ENCODE measurements at regions of chr20 and their contacts with region 1.

Region 1: DNA sequence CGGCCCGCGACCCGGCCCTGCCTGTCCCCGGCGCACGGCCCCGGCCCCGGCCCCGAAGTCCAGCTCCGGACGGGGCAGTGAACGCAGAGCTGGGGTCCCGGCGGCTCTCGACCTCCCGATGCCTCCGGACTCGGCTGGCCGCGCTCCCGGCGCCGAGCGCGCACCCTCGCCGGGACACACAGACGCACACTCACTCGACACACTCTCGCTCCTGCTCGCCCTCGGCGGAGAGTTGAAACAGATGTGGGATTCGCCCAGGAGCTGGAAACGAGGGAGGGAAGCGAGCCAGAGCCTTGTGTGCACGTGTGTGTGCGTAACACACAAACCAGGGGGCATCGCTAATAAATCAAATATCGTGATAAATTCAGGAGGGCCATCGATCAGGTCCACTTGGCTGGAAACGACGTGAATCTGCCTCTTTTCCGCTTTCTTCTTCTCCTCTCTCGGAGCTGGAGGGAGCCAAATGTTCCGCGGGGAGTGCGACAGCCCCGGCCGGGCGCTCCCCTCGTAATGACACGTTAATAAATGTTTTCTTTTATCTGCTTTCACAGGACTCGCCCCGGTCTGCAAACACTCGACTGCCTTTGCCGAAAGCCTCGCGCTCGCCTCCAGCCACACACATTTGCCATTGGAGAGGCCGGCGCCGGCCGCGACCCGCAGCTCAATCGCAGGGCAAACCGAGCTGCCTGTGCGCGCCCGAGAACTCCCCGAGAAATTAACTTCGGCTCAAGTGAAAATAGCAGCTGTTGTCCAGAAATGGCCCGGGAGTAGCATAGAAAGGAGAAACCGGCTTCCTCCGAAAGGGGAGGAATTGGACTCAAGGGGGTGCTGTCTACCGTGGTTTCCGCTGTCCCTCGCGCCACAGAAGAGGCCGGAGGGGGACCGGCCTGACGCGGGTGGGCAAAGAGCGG is 828 bp upstream of the SULF2 start:
- DNase-seq: peak; percentile 89 to 91
- H3K4me3 ChIP-seq: peak overlapping the region; percentile 55
- H3K4me3 Mint-ChIP-seq: peak overlapping the region; percentile 96
- H3K27ac Mint-ChIP-seq: peak overlapping the region; percentile 85
- H3K4me1 ChIP-seq: peaks cover 19% of the 10 kb centered on the region
- H3K4me1 Mint-ChIP-seq: peaks cover 35% of the 10 kb centered on the region
- H3K27me3 ChIP-seq: no peaks in the 10 kb centered on the region
- H3K27me3 Mint-ChIP-seq: peaks cover 2% of the 10 kb centered on the region
- CTCF ChIP-seq: peak; percentile 93

Region 2: GRCh38 chr20:47663333-47664067 is 122.6 kb before region 1 on chr20:
- CTCF ChIA-PET with region 1: interaction called, 5 read pairs
- POLR2A ChIA-PET with region 1: no interaction called
- intact Hi-C with region 1: loop called (anchors 5 kb)
- DNase-seq: peak; percentile 92 to 97
- H3K4me3 ChIP-seq: no peak overlapping the region
- H3K4me3 Mint-ChIP-seq: no peak overlapping the region
- H3K27ac Mint-ChIP-seq: peak overlapping the region; percentile 56
- H3K4me1 ChIP-seq: peaks cover 16% of the 10 kb centered on the region
- H3K4me1 Mint-ChIP-seq: peaks cover 18% of the 10 kb centered on the region
- H3K27me3 ChIP-seq: no peaks in the 10 kb centered on the region
- H3K27me3 Mint-ChIP-seq: no peaks in the 10 kb centered on the region
- CTCF ChIP-seq: peak; percentile 99 to 100

Region 3: DNA sequence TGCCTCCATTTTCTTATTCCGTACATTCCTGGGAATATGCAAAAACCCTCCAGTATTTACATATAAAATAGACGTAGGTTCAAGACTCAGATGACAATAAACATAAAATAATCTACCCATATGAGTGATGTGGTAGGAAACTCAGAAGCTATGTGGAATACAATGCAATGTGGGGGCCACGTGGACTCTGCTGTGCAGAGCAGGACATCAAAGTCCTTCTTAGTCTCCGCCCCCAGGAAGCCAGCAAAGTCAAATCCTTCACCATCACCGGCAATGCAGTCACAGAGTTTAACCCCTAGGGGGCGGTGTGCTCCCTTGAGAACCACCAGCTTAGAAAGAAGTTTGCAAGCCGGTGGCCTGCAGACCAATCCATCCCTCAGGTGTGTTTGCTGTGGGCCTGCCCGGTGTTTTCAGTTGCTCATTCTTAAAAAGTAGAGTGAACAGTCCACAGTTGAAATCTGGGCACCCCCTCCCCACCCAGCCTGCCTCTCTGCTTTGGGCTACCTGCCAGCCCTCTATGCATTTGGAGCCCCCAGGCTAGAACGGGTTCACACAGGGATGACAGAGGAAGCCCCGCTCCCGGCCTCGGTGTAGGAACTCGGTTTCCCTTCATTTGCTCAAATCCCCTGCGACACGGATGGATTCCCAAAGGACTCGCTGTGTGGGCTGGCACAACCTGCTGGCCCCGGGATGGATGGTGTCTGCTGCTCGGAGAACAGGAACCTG is 60.7 kb before region 1 on chr20:
- CTCF ChIA-PET with region 1: interaction called, 19 read pairs
- POLR2A ChIA-PET with region 1: no interaction called
- intact Hi-C with region 1: loop called (anchors 1 kb)
- DNase-seq: peak; percentile 94 to 95
- H3K4me3 ChIP-seq: no peak overlapping the region
- H3K4me3 Mint-ChIP-seq: no peak overlapping the region
- H3K27ac Mint-ChIP-seq: no peak overlapping the region
- H3K4me1 ChIP-seq: peaks cover 12% of the 10 kb centered on the region
- H3K4me1 Mint-ChIP-seq: peaks cover 9% of the 10 kb centered on the region
- H3K27me3 ChIP-seq: no peaks in the 10 kb centered on the region
- H3K27me3 Mint-ChIP-seq: no peaks in the 10 kb centered on the region
- CTCF ChIP-seq: peak; percentile 99 to 100

Region 4: GRCh38 chr20:47950073-47950913 is 164.2 kb after region 1 on chr20:
- CTCF ChIA-PET with region 1: no interaction called
- POLR2A ChIA-PET with region 1: no interaction called
- intact Hi-C with region 1: loop called (anchors 10 kb)
- DNase-seq: no peak
- H3K4me3 ChIP-seq: no peak overlapping the region
- H3K4me3 Mint-ChIP-seq: no peak overlapping the region
- H3K27ac Mint-ChIP-seq: no peak overlapping the region
- H3K4me1 ChIP-seq: no peaks in the 10 kb centered on the region
- H3K4me1 Mint-ChIP-seq: no peaks in the 10 kb centered on the region
- H3K27me3 ChIP-seq: no peaks in the 10 kb centered on the region
- H3K27me3 Mint-ChIP-seq: no peaks in the 10 kb centered on the region
- CTCF ChIP-seq: no peak

Region 5: GRCh38 chr20:48188657-48189551 is 402.8 kb after region 1 on chr20:
- CTCF ChIA-PET with region 1: interaction called, 6 read pairs
- POLR2A ChIA-PET with region 1: no interaction called
- intact Hi-C with region 1: loop called (anchors 1 kb)
- DNase-seq: peak; percentile 67
- H3K4me3 ChIP-seq: no peak overlapping the region
- H3K4me3 Mint-ChIP-seq: no peak overlapping the region
- H3K27ac Mint-ChIP-seq: no peak overlapping the region
- H3K4me1 ChIP-seq: peaks cover 18% of the 10 kb centered on the region
- H3K4me1 Mint-ChIP-seq: peaks cover 26% of the 10 kb centered on the region
- H3K27me3 ChIP-seq: no peaks in the 10 kb centered on the region
- H3K27me3 Mint-ChIP-seq: no peaks in the 10 kb centered on the region
- CTCF ChIP-seq: peak; percentile 45 to 90

Measured in Caco-2 (cell line).